ENCODE measurements at regions of chr16 and their contacts with region 1.

Region 1: DNA sequence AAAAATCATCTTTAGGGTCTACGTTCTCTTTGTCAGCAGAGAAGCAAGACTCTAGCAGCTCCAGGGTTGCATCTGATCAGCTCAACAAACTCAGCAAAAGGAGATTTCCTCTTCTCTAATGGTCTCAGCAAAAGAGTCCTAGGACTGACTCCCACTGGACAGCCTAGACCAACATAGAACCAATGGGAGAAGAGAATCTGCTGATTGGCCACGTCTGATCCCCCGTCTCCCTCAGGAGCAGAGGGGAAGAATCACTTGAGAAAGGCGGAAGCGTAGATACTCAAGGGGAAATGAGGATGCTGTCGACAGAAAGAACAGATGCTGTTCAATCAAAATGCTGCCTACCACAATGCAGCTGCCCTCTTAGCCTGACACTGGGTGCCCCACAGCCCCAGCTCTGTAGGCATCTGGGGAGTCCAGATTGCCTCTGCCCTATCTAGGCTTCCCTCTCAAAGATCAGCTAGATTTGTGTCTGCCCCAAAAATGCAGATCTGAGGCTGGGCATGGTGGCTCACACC is 31.5 kb upstream of the EMP2 start:
- DNase-seq: no peak

Region 2: DNA sequence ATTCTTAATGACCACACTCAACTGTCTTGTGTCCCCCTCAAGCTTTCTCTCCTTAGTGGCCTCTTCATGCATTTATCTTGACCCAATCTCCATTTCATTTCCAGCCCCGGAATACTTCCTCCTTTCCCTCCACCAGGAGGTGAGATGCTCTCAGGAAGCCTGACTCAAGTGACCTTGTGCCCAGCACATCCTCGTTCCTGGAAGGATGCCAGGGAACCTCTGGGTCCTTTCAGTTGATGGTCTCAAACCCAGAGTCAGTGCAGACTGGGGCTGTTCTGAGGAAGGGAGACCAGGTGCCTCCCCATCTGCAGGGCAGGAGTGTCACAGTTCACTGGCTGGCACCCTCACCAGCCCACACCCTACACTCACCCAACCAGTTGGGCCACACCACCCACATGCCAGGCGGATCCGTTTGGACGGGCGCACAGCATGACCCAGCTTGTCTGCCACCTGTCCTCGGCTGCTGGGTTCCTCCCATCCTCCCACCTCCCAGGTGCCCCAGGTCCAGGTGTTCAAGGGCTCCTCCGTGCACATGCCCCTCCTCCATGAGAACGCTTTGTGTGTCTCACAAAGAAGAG is 17.4 kb before region 1 on chr16:
- intact Hi-C with region 1: loop called in 1 of 2 experiments (anchors 1 kb)
- DNase-seq: no peak

Measured in posterior vena cava (tissue), 2 donors.